Activated B cell treated with CpG ODN at 0.5 μM for 24 hours (primary cell): ENCODE measurements at regions of chr18 and their contacts with region 1.

Region 1: GRCh38 chr18:45850021-45850420 is 24.5 kb downstream of the SIGLEC15 start:
- DNase-seq: no peak
- ATAC-seq: peak; percentile 86
- H3K4me3 Mint-ChIP-seq: no peak overlapping the region
- H3K27ac Mint-ChIP-seq: peak overlapping the region; percentile 50
- H3K4me1 Mint-ChIP-seq: peaks cover 4% of the 10 kb centered on the region
- H3K27me3 Mint-ChIP-seq: no peaks in the 10 kb centered on the region
- CTCF ChIP-seq: no peak

Region 2: DNA sequence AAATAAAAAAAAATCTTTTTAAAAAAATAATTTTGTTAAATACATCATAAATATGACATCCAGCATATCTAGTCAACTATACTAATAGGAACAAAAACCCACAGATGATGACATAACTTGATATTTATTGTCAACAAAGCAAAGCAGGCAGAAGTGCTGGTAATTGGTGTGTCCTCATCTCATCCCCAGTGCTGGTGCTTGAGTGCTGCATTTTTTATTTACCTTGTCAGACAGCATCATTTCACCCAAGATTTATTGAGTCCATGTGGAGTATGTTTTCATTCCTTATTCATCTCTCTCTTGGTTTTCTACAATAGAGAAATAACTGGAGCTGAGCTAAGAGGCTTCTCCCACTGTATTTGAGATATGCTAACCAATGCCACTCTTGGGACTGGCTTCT is 426.4 kb before region 1 on chr18:
- CTCF ChIA-PET with region 1: no interaction called
- POLR2A ChIA-PET with region 1: no interaction called
- intact Hi-C with region 1: no loop called
- DNase-seq: no peak
- ATAC-seq: no peak
- H3K4me3 Mint-ChIP-seq: no peak overlapping the region
- H3K27ac Mint-ChIP-seq: no peak overlapping the region
- H3K4me1 Mint-ChIP-seq: no peaks in the 10 kb centered on the region
- H3K27me3 Mint-ChIP-seq: peaks cover 9% of the 10 kb centered on the region
- CTCF ChIP-seq: no peak

Region 3: DNA sequence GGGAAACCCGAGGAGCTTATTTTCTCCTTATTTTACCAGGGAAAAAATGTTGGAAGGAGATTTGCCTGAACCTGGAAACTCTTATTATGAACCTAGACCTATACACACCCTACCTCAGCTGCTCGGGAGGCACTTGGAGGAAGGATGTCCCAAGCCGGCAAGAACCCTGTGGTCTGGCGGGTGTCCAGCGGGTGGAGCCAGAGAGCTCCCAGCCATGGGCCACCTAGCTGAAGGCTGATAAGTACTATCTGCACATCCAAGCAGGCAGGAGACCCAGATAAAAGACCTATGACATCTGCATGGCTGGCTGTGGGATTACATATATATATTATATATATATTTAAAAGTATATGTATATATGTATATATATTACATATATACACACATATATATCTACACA is 127.1 kb before region 1 on chr18:
- CTCF ChIA-PET with region 1: no interaction called
- POLR2A ChIA-PET with region 1: no interaction called
- intact Hi-C with region 1: no loop called
- DNase-seq: peak; percentile 50
- ATAC-seq: peak; percentile 80
- H3K4me3 Mint-ChIP-seq: no peak overlapping the region
- H3K27ac Mint-ChIP-seq: no peak overlapping the region
- H3K4me1 Mint-ChIP-seq: no peaks in the 10 kb centered on the region
- H3K27me3 Mint-ChIP-seq: peaks cover 8% of the 10 kb centered on the region
- CTCF ChIP-seq: no peak

Region 4: GRCh38 chr18:45874491-45875184 is 24.6 kb after region 1 on chr18:
- CTCF ChIA-PET with region 1: interaction called, 5 read pairs
- POLR2A ChIA-PET with region 1: no interaction called
- intact Hi-C with region 1: loop called (anchors 2 kb)
- DNase-seq: peak; percentile 22
- ATAC-seq: peak; percentile 93
- H3K4me3 Mint-ChIP-seq: peak overlapping the region; percentile 49
- H3K27ac Mint-ChIP-seq: peak overlapping the region; percentile 94
- H3K4me1 Mint-ChIP-seq: peaks cover 18% of the 10 kb centered on the region
- H3K27me3 Mint-ChIP-seq: no peaks in the 10 kb centered on the region
- CTCF ChIP-seq: no peak

Region 5: GRCh38 chr18:45896991-45897390 is 47.0 kb after region 1 on chr18:
- CTCF ChIA-PET with region 1: no interaction called
- POLR2A ChIA-PET with region 1: no interaction called
- intact Hi-C with region 1: loop called (anchors 5 kb)
- DNase-seq: no peak
- ATAC-seq: no peak
- H3K4me3 Mint-ChIP-seq: no peak overlapping the region
- H3K27ac Mint-ChIP-seq: no peak overlapping the region
- H3K4me1 Mint-ChIP-seq: no peaks in the 10 kb centered on the region
- H3K27me3 Mint-ChIP-seq: no peaks in the 10 kb centered on the region
- CTCF ChIP-seq: no peak